ENCODE measurements at regions of chr13 and their contacts with region 1.

Region 1: DNA sequence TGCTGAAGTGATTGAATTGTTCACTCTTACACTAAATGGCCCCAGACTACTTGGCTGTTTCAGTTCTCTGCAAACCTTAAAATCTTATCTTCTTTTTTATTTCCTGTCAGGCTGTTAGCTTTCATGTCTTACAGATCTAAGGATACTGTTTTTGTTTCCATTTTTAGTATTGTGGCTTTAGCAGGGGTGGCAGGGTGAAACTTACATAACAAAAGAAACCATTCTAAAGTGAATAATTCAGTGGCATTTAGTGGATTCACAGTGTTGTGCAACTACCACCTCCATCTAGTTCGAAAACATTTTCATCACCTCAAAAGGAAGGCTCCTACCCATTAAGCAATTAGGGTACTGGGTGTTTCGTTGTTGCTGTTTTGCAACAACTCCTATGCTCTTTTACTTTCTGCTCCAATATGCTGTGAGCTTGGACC is 19.8 kb downstream of the TMEM272 start:
- DNase-seq: peak in 4 of 14 experiments; percentile 39 to 85 (median 76)
- ATAC-seq: peak; percentile 58
- H3K4me3 ChIP-seq: peak overlapping the region; percentile 54
- H3K4me3 Mint-ChIP-seq: peak overlapping the region; percentile 86
- H3K27ac ChIP-seq: peak overlapping the region; percentile 76 to 79
- H3K27ac Mint-ChIP-seq: peak overlapping the region; percentile 89
- H3K4me1 ChIP-seq: peaks cover 78% of the 10 kb centered on the region
- H3K4me1 Mint-ChIP-seq: peaks cover 88% of the 10 kb centered on the region
- H3K27me3 ChIP-seq: no peaks in the 10 kb centered on the region
- H3K27me3 Mint-ChIP-seq: no peaks in the 10 kb centered on the region
- CTCF ChIP-seq: no peak

Region 2: GRCh38 chr13:51844862-51845573 is 19.8 kb after region 1 on chr13 and contains the start of gene TMEM272:
- CTCF ChIA-PET with region 1: interaction called, 12 read pairs
- POLR2A ChIA-PET with region 1: interaction called, 7 read pairs
- intact Hi-C with region 1: no loop called
- DNase-seq: peak in 12 of 14 experiments; percentile 25 to 71 (median 44)
- ATAC-seq: peak; percentile 84
- H3K4me3 ChIP-seq: no peak within 1 kb of the TSS
- H3K4me3 Mint-ChIP-seq: no peak within 1 kb of the TSS
- H3K27ac ChIP-seq: no peak within 1 kb of the TSS
- H3K27ac Mint-ChIP-seq: no peak within 1 kb of the TSS
- H3K4me1 ChIP-seq: peaks cover 7% of the 10 kb centered on the region
- H3K4me1 Mint-ChIP-seq: peaks cover 7% of the 10 kb centered on the region
- H3K27me3 ChIP-seq: no peaks in the 10 kb centered on the region
- H3K27me3 Mint-ChIP-seq: peaks cover 6% of the 10 kb centered on the region
- CTCF ChIP-seq: peak; percentile 89
- total RNA-seq, gene TMEM272: 2.7 to 2.8 TPM

Region 3: DNA sequence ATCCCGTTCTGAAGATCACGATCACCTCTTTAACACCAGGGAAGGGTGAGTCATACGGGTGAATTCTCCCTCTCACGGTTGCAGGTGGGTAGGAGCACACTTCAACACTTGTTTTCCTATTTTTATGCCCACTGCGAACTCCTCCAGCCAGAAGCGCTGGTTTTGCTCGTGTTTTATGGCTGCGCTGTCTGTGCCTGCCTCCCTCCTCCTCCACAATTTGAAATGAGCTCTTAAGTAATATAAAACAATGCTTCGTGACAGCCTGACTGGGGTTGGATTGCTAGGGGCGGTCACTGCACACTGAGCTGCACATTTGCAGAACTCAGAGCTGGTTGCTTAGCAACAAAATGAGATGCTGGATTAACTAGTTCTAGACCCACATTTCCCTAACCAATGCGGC is 49.5 kb after region 1 on chr13:
- CTCF ChIA-PET with region 1: no interaction called
- POLR2A ChIA-PET with region 1: no interaction called
- intact Hi-C with region 1: no loop called
- DNase-seq: no peak
- ATAC-seq: no peak
- H3K4me3 ChIP-seq: no peak overlapping the region
- H3K4me3 Mint-ChIP-seq: no peak overlapping the region
- H3K27ac ChIP-seq: no peak overlapping the region
- H3K27ac Mint-ChIP-seq: no peak overlapping the region
- H3K4me1 ChIP-seq: no peaks in the 10 kb centered on the region
- H3K4me1 Mint-ChIP-seq: no peaks in the 10 kb centered on the region
- H3K27me3 ChIP-seq: no peaks in the 10 kb centered on the region
- H3K27me3 Mint-ChIP-seq: peaks cover 7% of the 10 kb centered on the region
- CTCF ChIP-seq: no peak

Measured in CD4-positive, alpha-beta T cell (primary cell).